ENCODE measurements at regions of chr14 and their contacts with region 1.

Region 1: DNA sequence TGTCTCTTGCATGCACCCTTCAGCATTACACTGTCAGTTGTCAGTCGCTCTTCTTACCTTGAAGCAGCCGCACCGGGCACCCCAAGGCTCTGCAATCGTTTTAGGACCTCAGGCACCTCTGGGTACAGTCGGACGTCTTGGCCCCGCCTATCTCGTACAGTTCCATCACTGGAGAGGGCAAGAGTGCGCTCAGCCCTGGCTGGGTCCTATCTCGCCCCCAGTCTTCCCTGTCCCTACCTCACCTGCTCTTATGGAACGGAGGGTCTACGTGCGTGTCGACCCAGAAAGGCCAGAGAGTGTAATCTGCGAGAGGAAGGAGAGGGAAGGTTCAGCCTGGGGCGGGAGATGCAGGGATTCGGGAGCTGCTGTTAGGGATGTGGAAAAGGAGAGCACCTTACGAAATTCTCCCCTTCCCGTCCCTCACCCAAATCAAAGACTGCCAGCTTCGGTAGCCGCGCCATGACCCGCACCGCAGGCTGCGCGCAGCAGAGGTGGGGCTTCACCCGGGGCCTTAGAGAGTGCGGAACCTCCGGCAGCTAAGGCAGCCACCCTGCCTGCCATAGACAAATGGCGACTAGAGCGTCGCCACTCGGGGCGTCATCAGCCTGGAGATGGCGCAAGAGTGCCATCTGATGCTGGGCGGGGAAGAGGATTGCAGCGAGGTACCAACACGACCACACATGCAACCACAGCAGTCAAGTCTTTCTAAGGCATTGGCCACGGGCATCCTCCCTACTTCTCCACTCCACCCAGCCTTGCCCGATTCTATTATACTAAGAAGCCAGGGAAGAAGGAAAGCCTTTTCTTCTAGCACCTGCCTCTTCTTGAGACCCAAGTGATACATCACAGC is at the start of gene MDP1:
- DNase-seq: peak; percentile 79 to 97 (median 86)
- ATAC-seq: peak; percentile 72
- H3K4me3 ChIP-seq: peak within 1 kb of the TSS; percentile 84
- H3K4me3 Mint-ChIP-seq: peak within 1 kb of the TSS; percentile 97
- H3K27ac ChIP-seq: peak within 1 kb of the TSS; percentile 92
- H3K27ac Mint-ChIP-seq: peak within 1 kb of the TSS; percentile 96
- H3K4me1 ChIP-seq: peaks cover 44% of the 10 kb centered on the region
- H3K4me1 Mint-ChIP-seq: peaks cover 49% of the 10 kb centered on the region
- H3K27me3 ChIP-seq: no peaks in the 10 kb centered on the region
- H3K27me3 Mint-ChIP-seq: no peaks in the 10 kb centered on the region
- CTCF ChIP-seq: peak; percentile 67
- total RNA-seq, gene MDP1: 3.2 to 3.7 TPM

Region 2: DNA sequence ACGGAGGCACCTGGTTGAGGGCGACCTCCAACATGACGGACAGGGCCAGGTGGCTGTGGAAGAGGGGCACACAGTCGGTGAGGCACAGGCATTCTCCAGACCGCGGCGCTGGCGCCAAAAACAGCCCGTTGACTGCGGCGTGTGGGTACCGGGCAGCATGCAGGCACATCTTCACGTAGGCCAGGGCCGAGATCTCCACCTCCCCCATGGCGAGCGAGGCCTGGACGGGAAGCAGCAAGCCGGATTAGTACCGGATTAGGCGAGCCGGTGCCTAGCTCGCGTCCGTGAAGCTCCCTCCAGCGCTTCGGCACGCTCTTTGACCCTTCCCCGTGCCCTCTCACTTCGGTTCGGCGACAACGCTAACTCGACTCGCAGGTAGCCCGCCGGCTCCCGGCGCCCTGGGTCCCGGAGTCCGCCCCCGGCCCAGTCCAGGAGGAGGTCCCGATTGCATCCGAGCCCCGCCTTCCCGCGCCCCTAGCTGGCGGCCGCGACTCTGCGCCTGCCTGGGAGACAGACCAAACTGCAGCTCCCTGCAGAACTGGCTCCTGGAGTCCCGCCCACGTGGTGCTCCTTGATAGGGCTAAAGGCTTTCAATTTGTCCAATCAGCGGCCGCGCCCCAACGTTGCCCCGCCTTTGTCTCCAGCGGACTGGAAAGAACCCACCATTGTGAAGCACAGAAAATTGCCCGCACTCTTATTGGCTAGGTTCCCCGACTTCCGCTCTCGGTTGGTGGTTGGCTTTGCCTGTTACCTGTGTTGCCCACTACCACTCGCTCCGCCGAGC is 74.4 kb before region 1 on chr14 and contains the start of gene EMC9:
- CTCF ChIA-PET with region 1: interaction called, 5 read pairs
- POLR2A ChIA-PET with region 1: interaction called, 11 read pairs
- intact Hi-C with region 1: loop called in 1 of 2 experiments (anchors 1 kb)
- DNase-seq: peak; percentile 97 to 100 (median 99)
- ATAC-seq: peak; percentile 90
- H3K4me3 ChIP-seq: peak within 1 kb of the TSS; percentile 92
- H3K4me3 Mint-ChIP-seq: peak within 1 kb of the TSS; percentile 95
- H3K27ac ChIP-seq: peak within 1 kb of the TSS; percentile 62 to 71
- H3K27ac Mint-ChIP-seq: peak within 1 kb of the TSS; percentile 90
- H3K4me1 ChIP-seq: peaks cover 73% of the 10 kb centered on the region
- H3K4me1 Mint-ChIP-seq: peaks cover 76% of the 10 kb centered on the region
- H3K27me3 ChIP-seq: no peaks in the 10 kb centered on the region
- H3K27me3 Mint-ChIP-seq: no peaks in the 10 kb centered on the region
- CTCF ChIP-seq: no peak
- total RNA-seq, gene EMC9: 11.8 to 13.1 TPM

Region 3: DNA sequence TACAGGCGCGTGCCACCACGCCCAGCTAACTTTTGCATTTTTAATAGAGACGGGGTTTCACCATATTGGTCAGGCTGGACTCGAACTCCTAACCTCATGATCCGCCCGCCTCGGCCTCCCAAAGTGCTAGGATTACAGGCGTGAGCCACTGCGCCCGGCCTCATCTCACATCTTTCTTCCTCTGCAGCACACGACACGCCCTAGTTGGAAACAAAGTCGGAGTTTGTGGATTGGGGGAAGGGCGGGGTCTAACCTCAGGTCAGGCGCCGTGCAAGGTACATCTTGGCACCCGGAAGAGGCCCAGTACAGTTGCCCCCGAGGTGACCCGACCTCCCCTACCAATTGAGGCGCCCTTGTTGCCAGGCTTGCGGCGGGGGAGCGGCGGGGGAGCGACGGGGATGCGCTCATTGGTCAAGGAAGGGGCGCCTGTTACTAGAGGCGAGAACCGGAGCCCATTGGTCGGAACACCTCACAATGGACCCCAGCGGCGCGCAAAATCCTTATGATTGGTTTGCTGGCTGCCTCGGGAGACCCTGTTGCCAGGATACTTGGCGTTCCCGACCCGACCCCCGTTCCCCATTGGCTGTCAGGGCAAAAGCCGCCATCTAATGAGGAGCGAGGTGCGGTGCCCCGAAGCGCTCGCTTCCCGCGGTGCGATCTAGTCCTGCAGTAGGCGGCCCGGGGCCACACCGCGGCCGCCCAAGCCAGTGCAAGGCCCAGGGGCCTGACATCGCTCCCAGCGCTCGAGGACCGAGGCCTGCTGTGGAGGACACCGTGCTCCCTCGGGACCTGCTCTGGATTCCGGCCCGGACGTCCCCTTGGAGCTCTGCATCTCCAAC is 44.1 kb before region 1 on chr14 and contains the start of gene REC8:
- CTCF ChIA-PET with region 1: no interaction called
- POLR2A ChIA-PET with region 1: no interaction called
- intact Hi-C with region 1: no loop called
- DNase-seq: peak; percentile 54 to 85 (median 70)
- ATAC-seq: peak; percentile 83
- H3K4me3 ChIP-seq: peak within 1 kb of the TSS; percentile 56
- H3K4me3 Mint-ChIP-seq: peak within 1 kb of the TSS; percentile 89
- H3K27ac ChIP-seq: peak within 1 kb of the TSS; percentile 29 to 44
- H3K27ac Mint-ChIP-seq: peak within 1 kb of the TSS; percentile 79
- H3K4me1 ChIP-seq: peaks cover 21% of the 10 kb centered on the region
- H3K4me1 Mint-ChIP-seq: peaks cover 42% of the 10 kb centered on the region
- H3K27me3 ChIP-seq: no peaks in the 10 kb centered on the region
- H3K27me3 Mint-ChIP-seq: no peaks in the 10 kb centered on the region
- CTCF ChIP-seq: no peak
- total RNA-seq, gene REC8: 105 to 107 TPM

Region 4: DNA sequence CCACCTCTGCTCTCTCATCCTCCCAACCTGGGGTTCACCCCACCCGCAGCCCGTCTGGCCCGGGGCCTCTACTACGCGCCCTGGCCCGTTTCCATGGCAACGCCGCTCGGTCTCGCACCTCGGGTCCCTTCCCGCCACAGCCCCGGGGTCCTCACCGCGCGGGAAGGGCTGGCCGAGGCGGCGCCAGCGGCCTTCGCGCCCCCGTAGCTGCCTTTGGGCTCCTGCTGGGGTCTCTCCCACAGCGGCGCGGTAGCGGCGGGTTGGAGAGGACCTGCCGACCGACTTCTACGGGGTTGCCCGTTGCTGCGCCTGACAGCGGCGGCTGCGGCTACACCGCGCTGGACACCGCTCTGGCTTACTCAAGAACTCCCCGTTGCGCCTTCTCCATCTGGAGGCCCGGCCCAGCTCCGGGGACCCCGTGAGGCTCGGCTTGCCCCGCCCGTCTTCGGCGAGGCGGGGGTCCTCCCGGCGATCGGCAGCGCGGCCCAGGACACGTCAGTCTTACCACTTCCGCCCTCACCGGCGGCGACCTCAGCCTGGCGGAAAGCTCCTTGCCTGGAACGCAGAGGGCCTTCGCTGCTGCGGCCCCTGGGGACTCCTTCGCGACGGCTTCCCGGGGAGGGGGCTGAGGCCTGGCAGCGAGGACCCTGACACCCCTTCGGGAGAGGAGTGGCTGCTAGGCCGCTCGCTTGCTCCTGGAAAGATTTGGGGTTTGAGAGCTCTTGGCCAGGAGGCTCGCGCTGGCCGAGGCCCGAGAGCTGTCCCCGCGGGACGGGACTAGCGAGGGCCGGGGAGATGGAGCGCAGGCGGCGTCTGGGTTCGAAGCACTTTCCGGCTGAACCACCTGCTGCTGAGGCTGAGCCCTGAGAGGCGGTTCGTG is 20.3 kb before region 1 on chr14 and contains the start of gene TM9SF1:
- CTCF ChIA-PET with region 1: interaction called, 14 read pairs
- POLR2A ChIA-PET with region 1: interaction called, 99 read pairs
- intact Hi-C with region 1: loop called in 1 of 2 experiments (anchors 1 kb)
- DNase-seq: peak; percentile 78 to 95 (median 86)
- ATAC-seq: peak; percentile 88
- H3K4me3 ChIP-seq: peak within 1 kb of the TSS; percentile 93
- H3K4me3 Mint-ChIP-seq: peak within 1 kb of the TSS; percentile 87
- H3K27ac ChIP-seq: peak within 1 kb of the TSS; percentile 97 to 99
- H3K27ac Mint-ChIP-seq: peak within 1 kb of the TSS; percentile 92
- H3K4me1 ChIP-seq: peaks cover 37% of the 10 kb centered on the region
- H3K4me1 Mint-ChIP-seq: peaks cover 51% of the 10 kb centered on the region
- H3K27me3 ChIP-seq: no peaks in the 10 kb centered on the region
- H3K27me3 Mint-ChIP-seq: no peaks in the 10 kb centered on the region
- CTCF ChIP-seq: no peak
- total RNA-seq, gene TM9SF1: 12.9 to 13.0 TPM

Region 5: DNA sequence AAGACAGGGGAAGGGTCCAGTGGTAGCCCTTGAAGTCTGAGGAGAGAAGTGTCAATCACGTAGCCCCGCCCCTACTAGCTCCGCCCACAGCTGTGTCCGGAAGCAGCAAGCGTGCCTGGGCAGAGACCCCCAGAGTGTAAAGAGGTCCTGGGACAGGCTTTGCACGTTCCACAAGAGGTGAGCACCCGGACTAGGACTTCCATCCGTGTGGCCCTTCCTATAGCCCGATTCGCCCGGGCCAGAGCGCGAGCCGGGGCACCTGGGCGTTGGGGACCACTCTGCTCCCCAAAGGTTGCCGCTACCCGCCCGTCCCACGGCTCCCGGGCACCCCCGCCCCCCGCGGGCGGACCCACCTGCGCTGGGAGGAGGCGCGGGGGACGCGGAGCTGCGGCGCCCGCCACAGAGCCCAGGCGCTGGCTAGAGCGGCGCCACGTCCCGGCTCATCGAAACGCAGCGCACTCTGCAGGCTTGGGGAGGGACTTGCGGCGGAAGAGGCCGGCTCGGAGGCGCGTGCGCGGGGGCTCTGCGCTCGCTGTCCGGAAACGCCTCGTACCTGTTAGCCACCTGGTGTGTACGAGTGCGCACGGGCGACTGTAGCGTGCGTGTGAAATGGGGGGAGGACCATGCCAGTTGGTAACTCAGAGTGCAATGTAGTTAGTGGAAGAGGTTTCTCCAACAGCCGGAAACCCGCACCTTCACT is 55.6 kb after region 1 on chr14 and contains the start of gene RABGGTA:
- CTCF ChIA-PET with region 1: interaction called, 17 read pairs
- POLR2A ChIA-PET with region 1: interaction called, 20 read pairs
- intact Hi-C with region 1: loop called (anchors 1 to 2 kb)
- DNase-seq: peak; percentile 84 to 99 (median 92)
- ATAC-seq: peak; percentile 83
- H3K4me3 ChIP-seq: peak within 1 kb of the TSS; percentile 86
- H3K4me3 Mint-ChIP-seq: peak within 1 kb of the TSS; percentile 96
- H3K27ac ChIP-seq: peak within 1 kb of the TSS; percentile 92 to 95
- H3K27ac Mint-ChIP-seq: peak within 1 kb of the TSS; percentile 97
- H3K4me1 ChIP-seq: peaks cover 43% of the 10 kb centered on the region
- H3K4me1 Mint-ChIP-seq: peaks cover 40% of the 10 kb centered on the region
- H3K27me3 ChIP-seq: no peaks in the 10 kb centered on the region
- H3K27me3 Mint-ChIP-seq: no peaks in the 10 kb centered on the region
- CTCF ChIP-seq: peak; percentile 75
- total RNA-seq, gene RABGGTA: 52.3 to 55.2 TPM

Region 6: GRCh38 chr14:24310646-24311604 is 95.2 kb after region 1 on chr14 and contains the start of gene LTB4R:
- CTCF ChIA-PET with region 1: interaction called, 12 read pairs
- POLR2A ChIA-PET with region 1: interaction called, 15 read pairs
- intact Hi-C with region 1: no loop called
- DNase-seq: peak; percentile 47 to 91 (median 61)
- ATAC-seq: peak; percentile 81
- H3K4me3 ChIP-seq: peak within 1 kb of the TSS; percentile 65
- H3K4me3 Mint-ChIP-seq: peak within 1 kb of the TSS; percentile 88
- H3K27ac ChIP-seq: peak within 1 kb of the TSS; percentile 59 to 73
- H3K27ac Mint-ChIP-seq: peak within 1 kb of the TSS; percentile 76
- H3K4me1 ChIP-seq: peaks cover 80% of the 10 kb centered on the region
- H3K4me1 Mint-ChIP-seq: peaks cover 80% of the 10 kb centered on the region
- H3K27me3 ChIP-seq: no peaks in the 10 kb centered on the region
- H3K27me3 Mint-ChIP-seq: no peaks in the 10 kb centered on the region
- CTCF ChIP-seq: peak; percentile 45
- total RNA-seq, gene LTB4R: 15.6 to 18.3 TPM

Region 7: GRCh38 chr14:24431569-24432258 is 216.0 kb after region 1 on chr14:
- CTCF ChIA-PET with region 1: no interaction called
- POLR2A ChIA-PET with region 1: interaction called, 15 read pairs
- intact Hi-C with region 1: loop called (anchors 1 to 5 kb)
- DNase-seq: peak; percentile 78 to 96 (median 86)
- ATAC-seq: peak; percentile 53
- H3K4me3 ChIP-seq: peak overlapping the region; percentile 80
- H3K4me3 Mint-ChIP-seq: peak overlapping the region; percentile 92
- H3K27ac ChIP-seq: peak overlapping the region; percentile 92 to 94
- H3K27ac Mint-ChIP-seq: peak overlapping the region; percentile 97
- H3K4me1 ChIP-seq: peaks cover 63% of the 10 kb centered on the region
- H3K4me1 Mint-ChIP-seq: peaks cover 64% of the 10 kb centered on the region
- H3K27me3 ChIP-seq: no peaks in the 10 kb centered on the region
- H3K27me3 Mint-ChIP-seq: no peaks in the 10 kb centered on the region
- CTCF ChIP-seq: peak; percentile 89

Measured in CD4-positive, alpha-beta T cell (primary cell).